PC-9 (cell line): ENCODE measurements at regions of chr3 and their contacts with region 1.

Region 1: DNA sequence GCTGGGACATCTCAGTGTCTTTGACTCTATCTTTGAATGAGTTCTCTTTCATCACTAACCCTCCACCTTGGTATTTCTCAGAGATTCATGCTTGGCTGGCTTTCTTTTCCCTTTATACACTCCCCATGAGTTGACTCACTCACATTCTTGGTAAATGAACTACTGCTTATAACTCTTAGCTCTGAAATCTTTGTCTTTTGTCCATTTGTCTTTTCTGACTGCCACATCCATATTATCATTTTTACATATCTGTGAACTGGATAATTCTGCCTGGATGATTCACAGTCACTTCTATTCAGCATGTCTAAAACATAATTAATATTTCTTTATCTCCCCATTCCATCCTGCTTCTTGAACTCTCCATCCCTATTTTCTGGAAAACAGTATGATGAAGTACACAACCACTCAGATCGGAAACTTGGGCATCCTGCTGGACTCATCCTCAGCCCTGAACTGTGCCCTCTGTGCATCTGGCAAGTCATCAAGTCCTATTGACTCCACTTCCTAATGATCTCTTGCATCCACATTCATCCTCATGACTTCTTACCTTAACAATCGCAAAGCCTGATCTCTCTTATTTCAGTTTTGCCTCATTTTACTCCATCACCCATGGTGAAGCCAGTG is 66.9 kb downstream of the KCNAB1 start:
- DNase-seq: no peak
- H3K4me3 ChIP-seq: no peak overlapping the region
- H3K27ac ChIP-seq: no peak overlapping the region
- H3K4me1 ChIP-seq: no peaks in the 10 kb centered on the region
- H3K27me3 ChIP-seq: no peaks in the 10 kb centered on the region
- CTCF ChIP-seq: no peak

Region 2: DNA sequence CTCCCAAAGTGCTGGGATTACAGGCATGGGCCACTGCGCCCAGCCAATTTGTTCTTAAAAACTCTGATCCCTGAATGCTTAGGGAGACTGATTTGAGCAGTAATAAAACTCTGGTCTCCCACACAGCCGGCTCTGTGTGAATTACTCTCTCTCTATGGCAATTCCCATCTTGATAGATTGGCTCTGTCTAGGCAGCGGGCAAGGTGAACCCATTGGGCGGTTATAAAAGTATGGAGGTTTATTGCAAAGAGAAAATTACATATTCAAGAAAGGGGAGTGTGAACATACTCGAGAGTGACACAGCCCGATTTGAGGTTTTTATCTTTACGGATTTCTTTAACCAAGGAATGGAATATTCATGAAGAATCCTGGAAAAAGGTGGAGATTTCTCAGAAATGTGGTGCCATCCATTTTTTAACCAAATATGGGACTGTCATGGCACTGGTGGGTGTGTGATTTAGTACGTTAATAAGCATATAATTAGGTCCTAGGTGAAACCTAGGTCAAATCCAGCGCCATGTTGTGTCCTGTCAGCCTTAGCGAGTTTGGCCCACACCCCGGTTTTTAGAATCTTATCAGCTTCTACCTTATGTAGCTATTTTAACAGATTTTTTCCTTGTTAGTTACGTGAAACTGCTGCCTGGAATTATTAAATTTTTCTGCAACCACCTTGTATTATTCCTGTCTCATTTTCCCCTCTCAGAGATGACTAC is 324.0 kb before region 1 on chr3:
- CTCF ChIA-PET with region 1: no interaction called
- POLR2A ChIA-PET with region 1: interaction called, 21 read pairs
- intact Hi-C with region 1: no loop called
- DNase-seq: no peak
- H3K4me3 ChIP-seq: no peak overlapping the region
- H3K27ac ChIP-seq: no peak overlapping the region
- H3K4me1 ChIP-seq: no peaks in the 10 kb centered on the region
- H3K27me3 ChIP-seq: no peaks in the 10 kb centered on the region
- CTCF ChIP-seq: no peak

Region 3: GRCh38 chr3:155983838-155984474 is 203.3 kb before region 1 on chr3:
- CTCF ChIA-PET with region 1: no interaction called
- POLR2A ChIA-PET with region 1: no interaction called
- intact Hi-C with region 1: no loop called
- DNase-seq: no peak
- H3K4me3 ChIP-seq: no peak overlapping the region
- H3K27ac ChIP-seq: no peak overlapping the region
- H3K4me1 ChIP-seq: no peaks in the 10 kb centered on the region
- H3K27me3 ChIP-seq: no peaks in the 10 kb centered on the region
- CTCF ChIP-seq: no peak